Activated B cell treated with CpG ODN at 0.5 μM for 24 hours (primary cell): ENCODE measurements at regions of chr11 and their contacts with region 1.

Region 1: GRCh38 chr11:102346748-102347461 is at the start of gene BIRC2:
- DNase-seq: peak; percentile 98
- ATAC-seq: peak; percentile 86
- H3K4me3 Mint-ChIP-seq: peak within 1 kb of the TSS; percentile 93
- H3K27ac Mint-ChIP-seq: peak within 1 kb of the TSS; percentile 95
- H3K4me1 Mint-ChIP-seq: peaks cover 38% of the 10 kb centered on the region
- H3K27me3 Mint-ChIP-seq: no peaks in the 10 kb centered on the region
- CTCF ChIP-seq: no peak
- total RNA-seq, gene BIRC2: 27.1 and 34.9 TPM in 2 replicates

Region 2: DNA sequence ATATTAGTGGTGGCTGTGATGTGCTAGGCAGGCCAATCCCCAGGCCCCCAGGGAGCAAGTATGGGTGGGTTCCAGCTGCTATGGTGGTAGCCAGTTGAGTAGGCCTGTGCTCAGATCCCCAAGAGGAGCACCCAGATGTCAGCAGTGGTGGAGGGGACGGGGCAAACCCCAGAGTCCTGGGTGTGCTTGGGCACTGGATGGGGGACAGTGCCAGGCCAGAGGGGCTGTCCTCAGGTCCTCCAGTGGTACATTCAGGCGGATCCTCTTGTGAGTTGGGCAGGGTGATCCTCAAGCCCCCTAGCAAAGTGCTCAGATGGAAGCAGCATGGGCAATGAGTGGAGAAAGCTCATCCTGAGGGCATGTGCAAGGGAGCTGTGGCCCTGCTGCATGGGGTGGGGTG is 273.7 kb before region 1 on chr11:
- CTCF ChIA-PET with region 1: no interaction called
- POLR2A ChIA-PET with region 1: no interaction called
- intact Hi-C with region 1: no loop called
- DNase-seq: no peak
- ATAC-seq: no peak
- H3K4me3 Mint-ChIP-seq: no peak overlapping the region
- H3K27ac Mint-ChIP-seq: no peak overlapping the region
- H3K4me1 Mint-ChIP-seq: no peaks in the 10 kb centered on the region
- H3K27me3 Mint-ChIP-seq: peaks cover 2% of the 10 kb centered on the region
- CTCF ChIP-seq: no peak

Region 3: DNA sequence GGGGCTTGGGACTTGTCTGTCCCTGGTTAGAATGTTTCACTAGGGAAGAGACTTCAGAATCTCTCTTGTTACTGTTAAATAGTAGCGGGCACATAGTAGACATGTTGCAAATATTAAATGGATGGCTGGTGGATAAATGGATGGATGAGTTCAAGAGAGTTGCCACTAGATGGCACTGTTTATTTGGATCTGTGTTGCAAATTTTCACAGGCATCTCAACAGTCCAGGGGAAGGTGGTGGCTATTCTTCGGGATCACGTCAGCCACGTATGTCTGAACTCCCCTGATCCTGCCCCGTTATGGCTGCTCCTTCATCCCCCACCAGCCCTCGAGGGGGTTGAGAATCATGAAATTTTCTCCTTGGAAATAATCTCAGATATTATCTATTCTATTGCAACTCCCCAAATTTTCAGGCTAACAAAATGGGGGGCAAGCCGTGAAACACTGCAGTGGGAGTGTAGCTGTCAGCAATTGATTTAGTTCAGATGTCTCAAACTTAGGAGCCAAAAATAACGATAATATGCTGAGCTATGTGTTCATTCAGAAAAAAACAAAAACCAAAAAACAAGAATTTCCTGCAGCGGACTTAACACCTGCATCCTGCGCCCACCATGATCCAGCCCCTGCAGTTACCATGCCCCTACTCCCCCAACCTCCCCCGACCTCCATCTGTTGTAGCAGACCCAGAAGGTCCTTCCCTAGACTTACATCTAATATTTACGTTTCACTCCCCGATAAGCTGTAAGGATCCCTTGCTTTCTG is 58.8 kb before region 1 on chr11:
- CTCF ChIA-PET with region 1: interaction called, 36 read pairs
- POLR2A ChIA-PET with region 1: interaction called, 7 read pairs
- intact Hi-C with region 1: loop called (anchors 1 kb)
- DNase-seq: no peak
- ATAC-seq: peak; percentile 84
- H3K4me3 Mint-ChIP-seq: peak overlapping the region; percentile 74
- H3K27ac Mint-ChIP-seq: peak overlapping the region; percentile 57
- H3K4me1 Mint-ChIP-seq: peaks cover 37% of the 10 kb centered on the region
- H3K27me3 Mint-ChIP-seq: no peaks in the 10 kb centered on the region
- CTCF ChIP-seq: no peak

Region 4: GRCh38 chr11:102317099-102317767 is 29.7 kb before region 1 on chr11 and contains the start of gene BIRC3:
- CTCF ChIA-PET with region 1: interaction called, 6 read pairs
- POLR2A ChIA-PET with region 1: interaction called, 23 read pairs
- intact Hi-C with region 1: loop called (anchors 1 kb)
- DNase-seq: peak; percentile 82
- ATAC-seq: peak; percentile 84
- H3K4me3 Mint-ChIP-seq: peak within 1 kb of the TSS; percentile 98
- H3K27ac Mint-ChIP-seq: peak within 1 kb of the TSS; percentile 98
- H3K4me1 Mint-ChIP-seq: peaks cover 77% of the 10 kb centered on the region
- H3K27me3 Mint-ChIP-seq: no peaks in the 10 kb centered on the region
- CTCF ChIP-seq: no peak
- total RNA-seq, gene BIRC3: 236 and 270 TPM in 2 replicates

Region 5: GRCh38 chr11:102390667-102391465 is 44.0 kb after region 1 on chr11:
- CTCF ChIA-PET with region 1: interaction called, 13 read pairs
- POLR2A ChIA-PET with region 1: no interaction called
- intact Hi-C with region 1: no loop called
- DNase-seq: peak; percentile 37
- ATAC-seq: peak; percentile 95
- H3K4me3 Mint-ChIP-seq: no peak overlapping the region
- H3K27ac Mint-ChIP-seq: no peak overlapping the region
- H3K4me1 Mint-ChIP-seq: peaks cover 13% of the 10 kb centered on the region
- H3K27me3 Mint-ChIP-seq: no peaks in the 10 kb centered on the region
- CTCF ChIP-seq: peak; percentile 85

Region 6: DNA sequence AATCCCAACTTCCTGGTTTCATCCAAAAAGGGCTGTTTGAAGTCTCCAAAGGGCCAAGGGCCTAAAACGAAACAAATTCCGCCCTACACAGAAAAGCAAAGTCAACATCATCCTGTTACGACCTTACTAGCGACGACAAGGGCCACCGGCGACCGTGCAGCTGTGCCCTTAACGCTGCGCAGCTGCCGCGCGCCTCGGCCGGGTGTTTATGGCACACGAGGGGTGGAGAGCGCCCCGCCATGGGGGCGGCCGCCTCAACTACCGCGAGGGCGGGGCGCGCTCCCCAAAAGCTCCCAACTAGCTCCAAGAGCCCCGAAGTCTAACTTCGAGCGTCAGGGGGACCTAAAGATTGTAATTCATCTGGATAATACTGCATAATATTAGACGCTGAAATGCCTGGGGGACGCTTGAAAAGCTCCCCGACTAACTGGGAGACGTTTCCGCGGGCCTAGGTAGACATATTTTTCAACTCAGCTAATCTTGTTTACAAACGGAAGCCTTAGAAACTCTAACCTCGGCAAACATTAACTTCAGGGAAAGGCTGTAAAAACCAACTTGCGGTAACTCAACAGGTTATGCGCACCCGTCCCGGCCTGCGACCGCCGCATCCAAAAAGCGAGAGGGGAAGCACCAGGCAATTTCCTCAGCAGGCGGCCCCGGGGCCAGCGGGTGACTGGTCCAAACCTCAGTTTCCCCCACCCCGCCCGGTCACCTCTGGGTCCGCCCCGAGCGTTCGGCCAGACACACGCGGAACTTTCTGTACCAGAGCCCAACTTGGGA is 105.0 kb after region 1 on chr11:
- CTCF ChIA-PET with region 1: interaction called, 4 read pairs
- POLR2A ChIA-PET with region 1: interaction called, 8 read pairs
- intact Hi-C with region 1: loop called (anchors 1 kb)
- DNase-seq: peak; percentile 61
- ATAC-seq: peak; percentile 57
- H3K4me3 Mint-ChIP-seq: peak overlapping the region; percentile 98
- H3K27ac Mint-ChIP-seq: peak overlapping the region; percentile 99
- H3K4me1 Mint-ChIP-seq: peaks cover 69% of the 10 kb centered on the region
- H3K27me3 Mint-ChIP-seq: no peaks in the 10 kb centered on the region
- CTCF ChIP-seq: no peak

Region 7: DNA sequence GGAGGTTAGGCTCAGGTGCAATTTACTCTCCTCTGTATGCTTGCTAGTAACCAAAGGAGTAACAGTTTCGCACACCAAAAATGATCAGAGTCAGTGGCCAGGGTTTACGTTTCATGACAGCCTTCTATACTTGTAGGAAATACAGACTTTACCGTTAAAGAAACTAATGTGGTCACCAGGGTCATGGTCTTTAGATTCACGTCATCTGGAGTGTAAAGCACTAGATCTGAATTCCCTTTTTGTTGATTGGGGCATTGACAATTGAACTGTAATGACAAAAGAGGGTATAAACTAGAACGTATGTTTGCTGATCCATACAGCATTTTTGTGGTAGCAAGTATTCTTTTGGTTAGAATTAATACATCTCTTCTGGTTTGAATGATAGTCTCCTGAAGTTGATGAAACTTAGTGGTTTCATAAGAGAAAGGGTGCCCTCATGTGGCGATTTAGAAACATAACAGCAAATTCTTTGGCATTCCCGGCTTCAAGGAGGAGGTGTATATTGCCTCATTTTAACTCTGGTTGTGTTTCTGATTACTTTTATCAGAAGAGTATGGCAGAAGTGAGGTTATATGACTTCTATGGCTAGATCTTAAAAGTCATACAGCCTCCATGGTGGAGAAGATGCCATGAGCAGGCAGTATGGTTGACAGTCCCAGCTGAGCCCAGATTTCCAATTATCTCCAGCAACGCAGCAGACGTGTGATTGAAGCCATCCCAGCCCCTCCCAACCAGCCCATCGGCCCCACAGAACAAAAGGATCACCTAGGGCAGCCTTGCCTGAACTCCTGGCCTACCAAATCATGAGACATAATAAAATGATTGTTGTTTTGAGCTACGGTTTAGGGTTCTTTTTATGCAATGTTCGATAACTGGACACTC is 148.5 kb after region 1 on chr11:
- CTCF ChIA-PET with region 1: interaction called, 25 read pairs
- POLR2A ChIA-PET with region 1: interaction called, 3 read pairs
- intact Hi-C with region 1: loop called (anchors 1 kb)
- DNase-seq: no peak
- ATAC-seq: peak; percentile 77
- H3K4me3 Mint-ChIP-seq: no peak overlapping the region
- H3K27ac Mint-ChIP-seq: peak overlapping the region; percentile 53
- H3K4me1 Mint-ChIP-seq: peaks cover 17% of the 10 kb centered on the region
- H3K27me3 Mint-ChIP-seq: no peaks in the 10 kb centered on the region
- CTCF ChIP-seq: no peak

Region 8: GRCh38 chr11:103125462-103125861 is 778.6 kb after region 1 on chr11:
- CTCF ChIA-PET with region 1: no interaction called
- POLR2A ChIA-PET with region 1: no interaction called
- intact Hi-C with region 1: no loop called
- DNase-seq: no peak
- ATAC-seq: no peak
- H3K4me3 Mint-ChIP-seq: no peak overlapping the region
- H3K27ac Mint-ChIP-seq: no peak overlapping the region
- H3K4me1 Mint-ChIP-seq: no peaks in the 10 kb centered on the region
- H3K27me3 Mint-ChIP-seq: no peaks in the 10 kb centered on the region
- CTCF ChIP-seq: no peak